Activated CD4-positive, alpha-beta T cell treated with anti-CD3 and anti-CD28 coated beads for 36 hours (primary cell): ENCODE measurements at regions of chr10 and their contacts with region 1.

Region 1: GRCh38 chr10:61943674-61944410 is 42.3 kb downstream of the ARID5B start:
- DNase-seq: peak; percentile 51
- ATAC-seq: peak; percentile 78
- H3K4me3 Mint-ChIP-seq: peak overlapping the region; percentile 59
- H3K27ac Mint-ChIP-seq: peak overlapping the region; percentile 98
- H3K4me1 Mint-ChIP-seq: peaks cover 71% of the 10 kb centered on the region
- H3K27me3 Mint-ChIP-seq: no peaks in the 10 kb centered on the region

Region 2: DNA sequence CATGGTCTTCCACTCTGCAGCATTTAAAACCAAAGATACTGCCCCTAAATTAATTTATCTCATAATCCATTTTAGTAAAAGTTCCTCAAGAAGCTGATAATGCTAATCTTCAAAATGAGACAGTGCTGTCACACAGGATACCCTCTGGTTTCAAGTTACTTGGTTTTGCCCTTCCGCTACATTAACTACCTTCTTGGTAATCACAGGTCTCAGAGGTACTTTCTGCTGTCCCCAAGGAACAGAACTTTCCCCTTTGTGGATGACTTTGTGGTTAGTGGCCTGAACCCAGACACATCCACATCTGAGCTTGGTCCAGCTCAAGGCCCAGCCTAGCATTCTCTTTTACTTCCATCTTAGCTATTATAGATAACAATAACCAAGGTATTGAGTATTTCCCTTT is 401.9 kb before region 1 on chr10:
- CTCF ChIA-PET with region 1: no interaction called
- POLR2A ChIA-PET with region 1: no interaction called
- intact Hi-C with region 1: no loop called
- DNase-seq: no peak
- ATAC-seq: no peak
- H3K4me3 Mint-ChIP-seq: no peak overlapping the region
- H3K27ac Mint-ChIP-seq: no peak overlapping the region
- H3K4me1 Mint-ChIP-seq: no peaks in the 10 kb centered on the region
- H3K27me3 Mint-ChIP-seq: peaks cover 8% of the 10 kb centered on the region

Region 3: GRCh38 chr10:61987951-61988379 is 44.1 kb after region 1 on chr10:
- CTCF ChIA-PET with region 1: interaction called, 10 read pairs
- POLR2A ChIA-PET with region 1: interaction called, 18 read pairs
- intact Hi-C with region 1: loop called (anchors 1 kb)
- DNase-seq: peak; percentile 40
- ATAC-seq: peak; percentile 89
- H3K4me3 Mint-ChIP-seq: peak overlapping the region; percentile 29
- H3K27ac Mint-ChIP-seq: peak overlapping the region; percentile 99
- H3K4me1 Mint-ChIP-seq: peaks cover 92% of the 10 kb centered on the region
- H3K27me3 Mint-ChIP-seq: no peaks in the 10 kb centered on the region

Region 4: DNA sequence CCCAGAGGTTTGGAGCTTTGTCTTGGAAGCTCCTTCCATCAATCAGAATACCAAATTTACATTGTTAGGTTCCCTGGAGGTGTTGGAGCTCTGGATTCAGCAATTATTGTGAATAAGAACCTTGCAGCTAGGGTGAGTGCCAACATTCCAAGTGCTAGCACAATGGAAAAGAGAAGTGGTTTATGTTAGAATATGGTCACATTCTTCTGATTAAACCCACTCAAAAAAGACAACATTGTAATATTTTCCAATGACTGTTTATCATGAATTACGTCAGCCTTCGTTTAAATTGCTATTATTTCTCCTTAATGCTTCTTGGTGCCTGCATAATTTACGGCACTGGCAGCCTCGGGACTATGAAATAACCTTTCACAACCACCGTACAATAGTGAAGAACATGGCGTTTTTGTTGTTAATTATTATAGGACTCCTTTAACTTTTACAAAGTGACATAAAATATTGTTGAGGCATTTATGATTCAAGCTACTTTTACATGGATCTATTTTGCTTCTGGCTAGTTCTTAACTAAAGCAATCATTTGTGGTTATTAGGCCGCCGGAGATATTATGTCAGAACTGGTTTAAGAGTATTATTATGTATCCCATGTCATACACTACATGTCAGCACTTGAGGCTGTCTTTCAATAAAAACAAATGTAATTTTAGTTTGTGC is 75.3 kb after region 1 on chr10:
- CTCF ChIA-PET with region 1: no interaction called
- POLR2A ChIA-PET with region 1: interaction called, 4 read pairs
- intact Hi-C with region 1: loop called (anchors 1 kb)
- DNase-seq: no peak
- ATAC-seq: no peak
- H3K4me3 Mint-ChIP-seq: peak overlapping the region; percentile 11
- H3K27ac Mint-ChIP-seq: peak overlapping the region; percentile 100
- H3K4me1 Mint-ChIP-seq: peaks cover 88% of the 10 kb centered on the region
- H3K27me3 Mint-ChIP-seq: no peaks in the 10 kb centered on the region

Region 5: DNA sequence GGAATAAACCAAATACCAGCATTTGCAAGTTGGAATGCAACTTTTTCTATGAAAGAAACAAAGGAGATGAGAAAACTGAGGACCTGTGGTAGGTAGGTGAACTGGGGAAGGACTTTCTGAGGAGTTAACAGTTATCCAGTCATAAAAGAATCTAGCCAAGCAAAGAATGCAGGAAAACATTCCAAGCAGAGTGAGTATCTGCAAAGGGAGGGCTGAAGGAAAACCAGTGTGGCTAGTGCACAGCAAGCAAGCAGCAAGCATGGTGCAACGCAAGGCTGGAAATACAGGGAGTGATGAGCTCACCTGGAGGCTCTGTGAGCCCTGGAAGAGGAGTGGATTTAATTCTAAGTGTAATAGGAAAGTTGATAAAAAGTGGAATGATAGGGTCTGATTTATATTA is 280.8 kb after region 1 on chr10:
- CTCF ChIA-PET with region 1: no interaction called
- POLR2A ChIA-PET with region 1: no interaction called
- intact Hi-C with region 1: loop called in 1 of 2 experiments (anchors 5 kb)
- DNase-seq: no peak
- ATAC-seq: no peak
- H3K4me3 Mint-ChIP-seq: no peak overlapping the region
- H3K27ac Mint-ChIP-seq: peak overlapping the region; percentile 59
- H3K4me1 Mint-ChIP-seq: peaks cover 10% of the 10 kb centered on the region
- H3K27me3 Mint-ChIP-seq: no peaks in the 10 kb centered on the region

Region 6: DNA sequence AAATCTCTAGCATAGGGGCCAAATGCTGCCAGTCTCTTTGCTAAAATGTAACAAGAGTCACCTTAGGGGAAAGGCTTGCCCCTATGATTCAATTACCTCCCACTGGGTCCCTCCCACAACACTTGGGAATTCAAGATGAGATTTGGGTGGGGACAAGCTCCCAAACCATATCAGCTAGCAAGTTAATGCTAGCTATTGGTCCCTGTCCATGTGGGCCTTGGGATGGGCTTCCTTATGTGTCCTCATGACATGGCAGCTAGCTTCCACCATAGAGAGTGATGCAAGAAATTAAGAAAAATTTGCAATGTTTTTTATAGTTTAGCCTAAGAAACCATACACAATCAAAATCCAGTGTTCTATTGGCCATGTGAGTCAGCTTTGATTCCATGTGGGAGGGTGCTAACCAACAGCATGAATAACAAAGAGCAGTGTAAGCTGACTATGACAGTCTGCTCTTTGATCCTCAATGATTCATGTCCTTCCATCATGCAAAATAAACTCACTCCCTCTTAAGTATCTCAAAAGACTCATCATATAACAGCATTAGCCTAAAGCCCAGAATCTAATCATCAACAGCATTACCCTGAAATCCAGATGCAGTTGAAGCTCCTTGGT is 408.6 kb after region 1 on chr10:
- CTCF ChIA-PET with region 1: no interaction called
- POLR2A ChIA-PET with region 1: no interaction called
- intact Hi-C with region 1: loop called in 1 of 2 experiments (anchors 5 kb)
- DNase-seq: peak; percentile 56
- ATAC-seq: peak; percentile 97
- H3K4me3 Mint-ChIP-seq: no peak overlapping the region
- H3K27ac Mint-ChIP-seq: peak overlapping the region; percentile 86
- H3K4me1 Mint-ChIP-seq: peaks cover 21% of the 10 kb centered on the region
- H3K27me3 Mint-ChIP-seq: peaks cover 8% of the 10 kb centered on the region